ENCODE measurements at regions of chr10 and their contacts with region 1.

Region 1: DNA sequence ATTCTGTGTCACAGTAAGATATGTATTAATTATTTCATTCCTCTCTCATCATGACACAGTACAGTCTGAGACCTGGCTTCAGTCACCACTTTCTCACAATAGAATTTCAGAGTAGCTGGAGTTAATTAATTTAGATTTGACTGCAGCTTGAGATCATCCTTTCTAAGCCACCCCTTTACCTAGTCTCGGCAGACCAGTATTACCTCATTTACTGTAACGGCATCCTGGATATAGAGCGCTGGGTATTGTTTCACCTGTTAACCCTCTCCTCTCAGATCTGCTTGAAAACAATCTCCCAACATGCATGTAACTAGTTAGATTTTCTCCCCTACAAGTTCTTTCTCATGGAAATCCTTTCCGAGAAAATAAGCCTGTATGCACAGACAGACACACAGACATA is 1057.5 kb downstream of the GATA3 start:
- DNase-seq: no peak
- ATAC-seq: no peak

Region 2: GRCh38 chr10:8513155-8514147 is 598.5 kb before region 1 on chr10:
- intact Hi-C with region 1: loop called in 1 of 2 experiments (anchors 10 kb)
- DNase-seq: no peak
- ATAC-seq: no peak

Region 3: GRCh38 chr10:9075422-9075821 is 36.6 kb before region 1 on chr10:
- intact Hi-C with region 1: no loop called
- DNase-seq: no peak
- ATAC-seq: no peak

Measured in left cardiac atrium (tissue), 4 donors.